Natural killer cell (primary cell): ENCODE measurements at regions of chr4 and their contacts with region 1.

Region 1: GRCh38 chr4:98658287-98659105 is at the start of gene TSPAN5:
- DNase-seq: peak; percentile 81 to 88
- ATAC-seq: peak; percentile 82 to 92 (median 91)
- H3K4me3 ChIP-seq: peak within 1 kb of the TSS; percentile 78
- H3K4me3 Mint-ChIP-seq: peak within 1 kb of the TSS; percentile 90
- H3K27ac ChIP-seq: peak within 1 kb of the TSS; percentile 63
- H3K27ac Mint-ChIP-seq: peak within 1 kb of the TSS; percentile 59 to 86
- H3K4me1 ChIP-seq: peaks cover 29% of the 10 kb centered on the region
- H3K4me1 Mint-ChIP-seq: peaks cover 65 to 77% of the 10 kb centered on the region in 2 donors
- H3K27me3 ChIP-seq: no peaks in the 10 kb centered on the region
- H3K27me3 Mint-ChIP-seq: no peaks in the 10 kb centered on the region
- CTCF ChIP-seq: no peak
- total RNA-seq, gene TSPAN5: 6.8 to 13.7 (median 11.4) TPM

Region 2: GRCh38 chr4:98143001-98143899 is 515.2 kb before region 1 on chr4 and contains the start of gene STPG2:
- intact Hi-C with region 1: loop called (anchors 5 kb)
- DNase-seq: peak; percentile 87 to 97
- ATAC-seq: peak; percentile 100
- H3K4me3 ChIP-seq: peak within 1 kb of the TSS; percentile 87
- H3K4me3 Mint-ChIP-seq: peak within 1 kb of the TSS; percentile 98
- H3K27ac ChIP-seq: peak within 1 kb of the TSS; percentile 95
- H3K27ac Mint-ChIP-seq: peak within 1 kb of the TSS; percentile 94 to 95
- H3K4me1 ChIP-seq: peaks cover 13% of the 10 kb centered on the region
- H3K4me1 Mint-ChIP-seq: peaks cover 15 to 19% of the 10 kb centered on the region in 2 donors
- H3K27me3 ChIP-seq: no peaks in the 10 kb centered on the region
- H3K27me3 Mint-ChIP-seq: peaks cover 12 to 22% of the 10 kb centered on the region in 2 donors
- CTCF ChIP-seq: peak; percentile 54
- total RNA-seq, gene STPG2: 0.23 TPM in 1 of 3 donors, not detected in the others

Region 3: GRCh38 chr4:98446499-98447375 is 211.8 kb before region 1 on chr4:
- intact Hi-C with region 1: loop called (anchors 1 kb)
- DNase-seq: peak; percentile 63 to 80
- ATAC-seq: peak; percentile 79 to 90 (median 88)
- H3K4me3 ChIP-seq: peak overlapping the region; percentile 4
- H3K4me3 Mint-ChIP-seq: peak overlapping the region; percentile 75
- H3K27ac ChIP-seq: peak overlapping the region; percentile 71
- H3K27ac Mint-ChIP-seq: peak overlapping the region; percentile 89 to 91
- H3K4me1 ChIP-seq: peaks cover 42% of the 10 kb centered on the region
- H3K4me1 Mint-ChIP-seq: peaks cover 36 to 51% of the 10 kb centered on the region in 2 donors
- H3K27me3 ChIP-seq: no peaks in the 10 kb centered on the region
- H3K27me3 Mint-ChIP-seq: no peaks in the 10 kb centered on the region
- CTCF ChIP-seq: no peak

Region 4: GRCh38 chr4:98584265-98584664 is 74.2 kb before region 1 on chr4:
- intact Hi-C with region 1: no loop called
- DNase-seq: no peak
- ATAC-seq: no peak
- H3K4me3 ChIP-seq: no peak overlapping the region
- H3K4me3 Mint-ChIP-seq: no peak overlapping the region
- H3K27ac ChIP-seq: no peak overlapping the region
- H3K27ac Mint-ChIP-seq: no peak overlapping the region
- H3K4me1 ChIP-seq: no peaks in the 10 kb centered on the region
- H3K4me1 Mint-ChIP-seq: peaks cover 23 to 34% of the 10 kb centered on the region in 2 donors
- H3K27me3 ChIP-seq: no peaks in the 10 kb centered on the region
- H3K27me3 Mint-ChIP-seq: no peaks in the 10 kb centered on the region
- CTCF ChIP-seq: no peak

Region 5: DNA sequence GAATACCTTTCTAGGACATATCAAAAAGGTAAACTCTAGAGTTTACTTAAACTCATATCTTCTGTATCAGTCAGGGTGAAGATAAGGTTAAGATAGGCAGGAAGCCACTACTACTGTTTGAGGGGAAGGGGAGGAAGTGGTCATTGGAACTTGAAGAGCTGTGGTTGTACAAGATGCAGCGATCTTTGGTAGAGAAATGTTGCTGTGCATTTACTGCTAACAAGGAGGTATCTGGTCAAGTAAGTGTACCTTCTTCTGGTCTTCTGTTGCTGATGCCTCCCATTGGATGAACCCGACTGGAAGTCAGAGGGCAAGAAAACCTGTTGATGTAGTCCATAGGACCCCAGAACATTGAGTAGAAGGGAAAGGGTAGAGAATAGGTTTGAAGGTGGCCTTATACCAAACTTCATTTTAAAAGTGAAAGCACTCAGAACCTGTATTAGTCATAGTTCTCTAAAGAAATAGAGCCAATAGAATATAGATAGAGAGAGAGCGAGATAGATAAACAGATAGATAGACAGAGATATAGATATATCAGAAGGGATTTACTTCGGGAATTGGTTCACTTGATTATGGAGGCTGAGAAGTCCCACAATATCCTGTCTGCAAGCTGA is 47.8 kb after region 1 on chr4:
- intact Hi-C with region 1: loop called (anchors 2 kb)
- DNase-seq: peak; percentile 34 to 74
- ATAC-seq: peak; percentile 90 to 98 (median 90)
- H3K4me3 ChIP-seq: peak overlapping the region; percentile 14
- H3K4me3 Mint-ChIP-seq: peak overlapping the region; percentile 94
- H3K27ac ChIP-seq: peak overlapping the region; percentile 67
- H3K27ac Mint-ChIP-seq: peak overlapping the region; percentile 94 to 95
- H3K4me1 ChIP-seq: peaks cover 21% of the 10 kb centered on the region
- H3K4me1 Mint-ChIP-seq: peaks cover 44 to 55% of the 10 kb centered on the region in 2 donors
- H3K27me3 ChIP-seq: no peaks in the 10 kb centered on the region
- H3K27me3 Mint-ChIP-seq: peaks cover 0 to 2% of the 10 kb centered on the region in 2 donors
- CTCF ChIP-seq: no peak

Region 6: GRCh38 chr4:98995183-98996055 is 336.9 kb after region 1 on chr4 and contains the start of gene METAP1:
- intact Hi-C with region 1: loop called (anchors 1 kb)
- DNase-seq: peak; percentile 94 to 98
- ATAC-seq: peak; percentile 85 to 94 (median 86)
- H3K4me3 ChIP-seq: peak within 1 kb of the TSS; percentile 57
- H3K4me3 Mint-ChIP-seq: peak within 1 kb of the TSS; percentile 90
- H3K27ac ChIP-seq: peak within 1 kb of the TSS; percentile 92
- H3K27ac Mint-ChIP-seq: peak within 1 kb of the TSS; percentile 94 to 95
- H3K4me1 ChIP-seq: peaks cover 12% of the 10 kb centered on the region
- H3K4me1 Mint-ChIP-seq: peaks cover 30 to 33% of the 10 kb centered on the region in 2 donors
- H3K27me3 ChIP-seq: no peaks in the 10 kb centered on the region
- H3K27me3 Mint-ChIP-seq: no peaks in the 10 kb centered on the region
- CTCF ChIP-seq: peak; percentile 63
- total RNA-seq, gene METAP1: 41.1 to 54.3 (median 41.5) TPM

Region 7: GRCh38 chr4:99563310-99564186 is 905.1 kb after region 1 on chr4 and contains the start of gene TRMT10A:
- intact Hi-C with region 1: loop called (anchors 5 kb)
- DNase-seq: peak; percentile 88 to 97
- ATAC-seq: peak; percentile 85 to 94 (median 88)
- H3K4me3 ChIP-seq: peak within 1 kb of the TSS; percentile 73
- H3K4me3 Mint-ChIP-seq: peak within 1 kb of the TSS; percentile 94
- H3K27ac ChIP-seq: peak within 1 kb of the TSS; percentile 94
- H3K27ac Mint-ChIP-seq: peak within 1 kb of the TSS; percentile 99 to 100
- H3K4me1 ChIP-seq: peaks cover 10% of the 10 kb centered on the region
- H3K4me1 Mint-ChIP-seq: peaks cover 6 to 11% of the 10 kb centered on the region in 2 donors
- H3K27me3 ChIP-seq: peaks cover 14% of the 10 kb centered on the region
- H3K27me3 Mint-ChIP-seq: peaks cover 21 to 32% of the 10 kb centered on the region in 2 donors
- CTCF ChIP-seq: no peak
- total RNA-seq, gene TRMT10A: 1.6 to 2.6 (median 2.2) TPM